Activated T-helper 1 cell treated with anti-CD3 and anti-CD28 coated beads, Interleukin-12 subunit alpha, Interleukin-12 subunit beta, Interleukin-2, Interleukin-4 antibody, amounts not matched to agents 30 ng/mL and 10 ng/mL and 1 ng/mL, durations not matched to agents 14 hours and 24 hours and 36 hours (primary cell): ENCODE measurements at regions of chr4 and their contacts with region 1.

Region 1: GRCh38 chr4:139950568-139950967 is 203.4 kb downstream of the MAML3 start:
- DNase-seq: peak; percentile 57
- H3K4me3 Mint-ChIP-seq: peak overlapping the region; percentile 48
- H3K27ac Mint-ChIP-seq: peak overlapping the region; percentile 85
- H3K4me1 Mint-ChIP-seq: peaks cover 49% of the 10 kb centered on the region
- H3K27me3 Mint-ChIP-seq: peaks cover 9% of the 10 kb centered on the region

Region 2: DNA sequence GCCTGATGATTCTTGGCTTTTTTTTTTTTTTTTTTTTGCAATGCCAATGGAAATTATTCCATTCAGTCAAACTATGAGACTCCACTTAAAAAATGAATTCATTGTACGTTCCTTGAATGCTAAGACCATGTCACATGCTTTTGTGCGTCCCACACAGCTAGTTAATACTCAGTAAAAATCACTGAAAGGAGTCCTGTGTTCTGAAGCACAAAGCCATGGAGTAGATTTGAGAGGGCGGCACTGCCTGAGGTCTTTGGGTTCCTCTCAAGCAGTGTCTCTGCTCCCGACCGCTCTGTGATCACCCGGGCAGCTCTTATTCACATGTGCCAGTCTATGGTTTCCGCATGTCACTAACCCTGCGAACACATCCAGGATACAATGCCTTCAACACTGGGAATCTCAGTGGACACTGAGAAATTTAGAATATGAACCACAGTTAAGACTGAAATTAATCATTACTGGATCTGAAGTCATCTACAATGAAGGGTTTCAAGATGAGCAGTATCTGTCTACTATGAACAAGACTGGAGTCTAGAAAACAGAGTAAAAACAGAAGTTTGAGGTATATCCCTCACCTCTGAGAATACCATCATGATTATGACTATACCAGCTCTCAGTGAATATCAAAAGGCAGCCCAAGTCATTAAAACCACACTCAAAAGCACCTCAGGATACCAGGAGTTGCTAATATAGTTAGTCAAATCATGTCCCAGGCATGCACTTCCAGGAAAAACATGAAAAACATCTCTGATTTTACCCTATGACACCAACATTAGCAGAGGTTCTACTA is 91.9 kb before region 1 on chr4:
- intact Hi-C with region 1: loop called (anchors 1 kb)
- DNase-seq: no peak
- H3K4me3 Mint-ChIP-seq: no peak overlapping the region
- H3K27ac Mint-ChIP-seq: no peak overlapping the region
- H3K4me1 Mint-ChIP-seq: peaks cover 33% of the 10 kb centered on the region
- H3K27me3 Mint-ChIP-seq: peaks cover 18% of the 10 kb centered on the region

Region 3: GRCh38 chr4:139978692-139979091 is 28.1 kb after region 1 on chr4:
- intact Hi-C with region 1: loop called (anchors 1 kb)
- DNase-seq: no peak
- H3K4me3 Mint-ChIP-seq: peak overlapping the region; percentile 38
- H3K27ac Mint-ChIP-seq: no peak overlapping the region
- H3K4me1 Mint-ChIP-seq: peaks cover 42% of the 10 kb centered on the region
- H3K27me3 Mint-ChIP-seq: no peaks in the 10 kb centered on the region

Region 4: DNA sequence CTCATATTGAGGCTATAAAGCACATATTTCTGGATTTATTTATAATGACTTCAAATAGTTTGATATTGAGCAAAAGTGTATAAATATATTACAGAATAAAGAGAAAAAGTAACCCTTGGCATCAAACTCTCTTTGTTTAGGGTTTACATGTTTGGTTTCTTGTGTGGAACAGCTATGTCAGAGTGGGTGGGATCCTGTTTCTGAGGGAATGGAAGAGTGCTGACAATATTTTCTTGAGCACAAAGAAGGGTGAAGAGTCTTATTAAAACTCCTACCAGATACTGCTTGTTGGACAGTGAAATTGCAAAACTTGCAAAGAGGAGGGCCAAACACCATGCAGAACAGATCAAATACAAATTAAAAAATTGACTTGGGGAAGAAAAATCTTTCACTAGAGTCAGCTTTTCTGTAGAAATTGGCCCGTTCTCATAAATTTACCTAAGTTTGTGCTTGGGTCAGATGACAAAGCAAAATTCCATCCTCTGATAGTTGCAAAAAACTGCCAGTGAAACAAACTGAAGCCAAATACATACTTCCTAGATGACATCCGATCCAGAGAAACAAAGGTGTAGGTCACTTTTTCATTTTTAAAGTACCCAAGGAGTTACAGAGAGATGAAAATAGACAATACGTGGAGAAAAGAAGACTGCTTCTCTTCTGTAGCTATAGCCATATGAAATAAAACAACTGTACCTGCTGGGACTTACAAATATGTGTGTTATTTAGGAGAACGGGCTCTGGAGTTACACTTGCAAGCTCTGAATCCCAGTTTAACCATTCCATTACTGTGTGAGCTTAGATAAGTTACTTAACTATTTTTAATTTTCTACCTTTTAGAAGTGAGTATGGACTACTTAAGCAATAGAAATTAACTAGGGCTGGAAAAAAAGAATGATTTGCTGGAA is 70.1 kb after region 1 on chr4:
- intact Hi-C with region 1: no loop called
- DNase-seq: no peak
- H3K4me3 Mint-ChIP-seq: no peak overlapping the region
- H3K27ac Mint-ChIP-seq: no peak overlapping the region
- H3K4me1 Mint-ChIP-seq: no peaks in the 10 kb centered on the region
- H3K27me3 Mint-ChIP-seq: peaks cover 26% of the 10 kb centered on the region

Region 5: DNA sequence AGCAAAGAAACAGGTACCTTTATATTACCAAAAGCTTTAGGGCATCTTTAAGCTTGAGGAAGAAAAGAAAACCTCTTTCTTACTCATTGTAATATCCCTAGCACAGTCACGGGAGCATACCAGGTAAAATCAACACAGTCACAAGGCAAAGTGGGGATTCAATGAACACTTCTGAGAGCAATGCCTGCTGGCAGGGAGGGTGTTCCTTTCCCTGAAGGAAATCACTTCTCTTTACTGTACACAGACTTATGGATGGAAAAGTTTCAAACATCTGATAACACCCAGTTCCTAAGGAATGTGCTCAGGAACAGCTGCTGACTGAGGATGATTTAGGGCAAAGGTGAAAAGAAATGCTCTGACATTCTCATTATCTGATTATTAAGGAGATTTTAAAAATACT is 108.6 kb after region 1 on chr4:
- intact Hi-C with region 1: loop called (anchors 5 kb)
- DNase-seq: no peak
- H3K4me3 Mint-ChIP-seq: no peak overlapping the region
- H3K27ac Mint-ChIP-seq: no peak overlapping the region
- H3K4me1 Mint-ChIP-seq: peaks cover 17% of the 10 kb centered on the region
- H3K27me3 Mint-ChIP-seq: peaks cover 71% of the 10 kb centered on the region

Region 6: GRCh38 chr4:140103676-140104075 is 153.1 kb after region 1 on chr4:
- intact Hi-C with region 1: loop called (anchors 2 kb)
- DNase-seq: peak; percentile 54
- H3K4me3 Mint-ChIP-seq: peak overlapping the region; percentile 39
- H3K27ac Mint-ChIP-seq: peak overlapping the region; percentile 75
- H3K4me1 Mint-ChIP-seq: peaks cover 72% of the 10 kb centered on the region
- H3K27me3 Mint-ChIP-seq: peaks cover 19% of the 10 kb centered on the region

Region 7: DNA sequence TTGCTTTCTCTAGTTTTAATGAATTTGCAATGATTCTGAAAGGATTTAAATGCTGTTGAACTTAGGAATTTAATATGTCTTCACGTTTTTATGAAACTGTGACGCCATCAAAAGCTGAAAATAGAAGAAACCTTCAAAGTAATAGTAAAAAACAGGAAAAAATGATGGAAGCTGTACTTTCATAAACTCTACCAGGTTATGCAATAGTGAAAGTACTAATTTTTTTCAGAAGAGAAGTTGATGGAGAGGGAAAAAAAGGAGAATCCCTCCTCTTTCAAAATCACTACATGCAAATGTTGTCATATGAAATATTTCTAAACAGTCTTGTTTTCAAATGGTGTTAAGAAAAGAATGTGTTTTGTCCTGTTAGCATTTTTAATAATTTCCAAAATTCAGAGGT is 1343.7 kb after region 1 on chr4:
- intact Hi-C with region 1: no loop called
- DNase-seq: no peak
- H3K4me3 Mint-ChIP-seq: no peak overlapping the region
- H3K27ac Mint-ChIP-seq: no peak overlapping the region
- H3K4me1 Mint-ChIP-seq: no peaks in the 10 kb centered on the region
- H3K27me3 Mint-ChIP-seq: no peaks in the 10 kb centered on the region